ENCODE measurements at regions of chr1 and their contacts with region 1.

Region 1: DNA sequence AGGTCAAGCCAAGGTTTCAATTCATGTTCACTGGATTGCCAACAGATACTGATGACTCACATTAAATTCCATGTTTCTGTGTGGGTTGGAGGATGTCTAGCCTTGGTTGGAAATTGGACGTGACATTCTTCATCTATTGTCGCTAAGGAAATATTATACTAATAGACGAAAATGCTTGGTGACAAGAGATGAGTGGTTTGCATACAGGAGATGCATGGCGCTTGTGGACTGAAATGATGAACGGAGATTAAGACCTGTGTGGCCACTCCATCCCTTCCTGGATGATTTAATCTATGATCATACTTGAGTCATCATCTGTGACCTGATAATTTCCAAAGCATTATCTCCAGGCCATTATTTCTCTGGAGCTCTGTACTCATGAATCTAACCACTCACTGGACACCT is 97.0 kb upstream of the CD34 start:
- DNase-seq: no peak
- ATAC-seq: no peak
- H3K4me3 ChIP-seq: no peak overlapping the region
- H3K4me1 ChIP-seq: no peaks in the 10 kb centered on the region
- CTCF ChIP-seq: no peak

Region 2: DNA sequence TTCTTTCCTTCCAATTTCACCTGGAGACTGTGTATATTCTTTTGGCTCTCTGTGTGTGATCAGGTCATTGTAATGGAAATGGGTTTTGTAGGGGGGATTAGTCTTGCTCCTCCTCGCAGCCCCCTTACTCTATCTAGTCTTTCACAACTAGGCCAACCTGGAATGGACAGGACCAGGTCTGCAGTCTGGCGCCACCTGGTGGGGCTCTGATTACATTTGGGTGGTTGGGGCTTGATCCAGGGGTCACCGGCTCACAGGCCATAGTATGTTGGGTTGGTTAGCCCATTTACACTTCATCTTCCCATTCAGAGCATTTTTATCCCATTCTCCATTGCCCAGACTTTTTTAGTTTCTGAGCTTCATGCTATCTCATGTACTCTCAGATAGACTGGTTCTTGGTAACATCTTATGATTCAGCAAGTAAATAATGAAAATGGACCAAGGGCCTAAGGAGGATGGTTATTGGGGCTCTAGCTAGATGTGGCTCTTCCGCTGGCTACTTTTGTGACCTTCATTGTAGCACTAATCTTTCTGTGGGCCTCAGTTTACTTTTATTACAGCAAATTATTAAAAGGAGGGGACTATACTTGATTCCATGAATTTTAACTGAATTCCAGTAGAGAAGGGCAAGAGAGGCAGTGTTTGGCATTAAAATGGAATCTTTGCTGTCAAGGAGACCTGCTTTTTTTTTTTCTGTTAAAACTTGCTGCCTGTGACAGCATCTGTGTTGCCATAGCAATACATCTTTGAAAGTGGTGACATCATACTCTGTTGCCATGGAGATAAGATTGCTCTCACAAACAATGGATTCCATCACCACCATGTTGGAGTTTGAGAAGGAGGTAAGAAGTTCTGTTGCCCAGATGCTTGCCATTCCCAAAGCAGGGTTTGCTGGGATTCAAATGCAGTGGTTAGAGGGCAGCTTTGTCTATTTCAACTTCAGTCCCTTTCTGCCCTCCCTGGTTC is 86.1 kb after region 1 on chr1:
- intact Hi-C with region 1: loop called in 1 of 2 experiments (anchors 10 kb)
- DNase-seq: peak in 2 of 3 donors; percentile 72 to 82
- ATAC-seq: peak; percentile 72
- H3K4me3 ChIP-seq: no peak overlapping the region
- H3K4me1 ChIP-seq: no peaks in the 10 kb centered on the region
- CTCF ChIP-seq: peak; percentile 27

Region 3: DNA sequence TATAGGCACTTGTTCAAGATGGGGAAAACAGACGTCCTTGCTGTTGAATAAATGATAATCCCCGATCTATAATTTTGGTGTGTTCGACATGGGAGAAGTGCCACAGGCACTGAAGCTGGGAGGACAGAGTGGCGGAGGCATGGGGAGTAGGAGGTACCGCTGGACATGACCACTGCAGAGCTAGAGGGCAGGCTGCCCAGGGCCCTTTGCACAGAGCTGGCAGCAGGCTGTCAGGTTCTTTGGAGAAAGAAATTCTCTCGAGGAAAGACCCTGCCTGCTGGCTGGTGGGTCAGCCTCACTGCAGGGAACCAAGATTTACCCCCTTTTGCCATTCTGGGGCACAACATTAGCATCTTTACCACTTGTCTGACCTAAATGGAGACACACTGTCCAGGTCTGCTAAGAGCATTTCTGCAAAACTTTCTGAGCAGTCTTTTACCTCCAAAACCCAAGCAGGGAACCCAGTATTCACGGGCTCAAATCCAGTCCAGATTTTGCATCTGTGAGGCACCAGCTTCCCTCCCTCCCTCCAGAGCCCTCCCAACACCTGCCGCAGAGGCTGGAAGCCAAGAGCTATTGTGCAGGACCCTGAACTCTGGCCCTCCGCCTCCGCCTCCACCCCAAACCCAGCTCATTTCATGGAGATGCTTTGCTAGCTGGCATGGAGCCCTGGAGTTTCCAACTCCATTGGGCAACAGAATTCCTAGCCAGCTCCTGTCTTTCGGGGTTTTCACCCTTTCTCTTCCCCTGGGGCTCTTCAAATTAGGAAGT is 93.9 kb after region 1 on chr1:
- intact Hi-C with region 1: loop called (anchors 5 to 10 kb)
- DNase-seq: peak; percentile 75 to 84 (median 80)
- ATAC-seq: peak; percentile 94
- H3K4me3 ChIP-seq: no peak overlapping the region
- H3K4me1 ChIP-seq: peaks cover 8% of the 10 kb centered on the region
- CTCF ChIP-seq: no peak

Region 4: GRCh38 chr1:208184088-208184911 is 176.4 kb after region 1 on chr1:
- intact Hi-C with region 1: no loop called
- DNase-seq: peak; percentile 66 to 78 (median 74)
- ATAC-seq: peak; percentile 93
- H3K4me3 ChIP-seq: no peak overlapping the region
- H3K4me1 ChIP-seq: peaks cover 51% of the 10 kb centered on the region
- CTCF ChIP-seq: no peak